Transverse colon (tissue), 4 donors: ENCODE measurements at regions of chr1 and their contacts with region 1.

Region 1: GRCh38 chr1:21434394-21434793 is 5.5 kb upstream of the NBPF3 start:
- DNase-seq: no peak
- H3K4me3 ChIP-seq: no peak overlapping the region
- H3K27ac ChIP-seq: no peak overlapping the region
- H3K4me1 ChIP-seq: peaks cover 0 to 11% (median 3%) of the 10 kb centered on the region in 4 donors
- H3K27me3 ChIP-seq: peaks cover 13% of the 10 kb centered on the region
- CTCF ChIP-seq: no peak
- EP300 ChIP-seq: no peak
- POLR2A ChIP-seq: no peak

Region 2: DNA sequence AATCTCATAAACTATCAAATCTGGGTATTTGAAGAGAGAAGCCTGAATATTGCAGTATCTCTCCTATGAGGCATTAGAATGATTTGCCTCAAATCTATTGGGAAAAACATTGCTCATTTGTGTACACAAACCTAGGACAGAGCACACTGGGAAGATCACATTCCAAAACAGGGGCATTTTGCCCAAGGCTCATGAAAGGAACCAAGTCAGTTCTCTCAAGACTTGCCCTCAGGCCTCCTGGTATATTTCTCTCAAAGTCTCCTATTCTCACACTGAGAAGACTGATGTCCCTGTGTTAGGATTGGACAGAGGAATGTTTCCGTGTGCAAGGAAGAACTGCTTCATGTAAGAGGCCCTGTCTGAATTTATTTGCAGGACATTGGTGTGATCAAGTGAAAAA is 44.6 kb after region 1 on chr1:
- in situ Hi-C with region 1: loop called in 1 of 4 experiments (anchors 5 kb)
- intact Hi-C with region 1: no loop called
- DNase-seq: no peak
- H3K4me3 ChIP-seq: no peak overlapping the region
- H3K27ac ChIP-seq: no peak overlapping the region
- H3K4me1 ChIP-seq: no peaks in the 10 kb centered on the region
- H3K27me3 ChIP-seq: no peaks in the 10 kb centered on the region
- CTCF ChIP-seq: no peak
- EP300 ChIP-seq: no peak
- POLR2A ChIP-seq: no peak

Region 3: DNA sequence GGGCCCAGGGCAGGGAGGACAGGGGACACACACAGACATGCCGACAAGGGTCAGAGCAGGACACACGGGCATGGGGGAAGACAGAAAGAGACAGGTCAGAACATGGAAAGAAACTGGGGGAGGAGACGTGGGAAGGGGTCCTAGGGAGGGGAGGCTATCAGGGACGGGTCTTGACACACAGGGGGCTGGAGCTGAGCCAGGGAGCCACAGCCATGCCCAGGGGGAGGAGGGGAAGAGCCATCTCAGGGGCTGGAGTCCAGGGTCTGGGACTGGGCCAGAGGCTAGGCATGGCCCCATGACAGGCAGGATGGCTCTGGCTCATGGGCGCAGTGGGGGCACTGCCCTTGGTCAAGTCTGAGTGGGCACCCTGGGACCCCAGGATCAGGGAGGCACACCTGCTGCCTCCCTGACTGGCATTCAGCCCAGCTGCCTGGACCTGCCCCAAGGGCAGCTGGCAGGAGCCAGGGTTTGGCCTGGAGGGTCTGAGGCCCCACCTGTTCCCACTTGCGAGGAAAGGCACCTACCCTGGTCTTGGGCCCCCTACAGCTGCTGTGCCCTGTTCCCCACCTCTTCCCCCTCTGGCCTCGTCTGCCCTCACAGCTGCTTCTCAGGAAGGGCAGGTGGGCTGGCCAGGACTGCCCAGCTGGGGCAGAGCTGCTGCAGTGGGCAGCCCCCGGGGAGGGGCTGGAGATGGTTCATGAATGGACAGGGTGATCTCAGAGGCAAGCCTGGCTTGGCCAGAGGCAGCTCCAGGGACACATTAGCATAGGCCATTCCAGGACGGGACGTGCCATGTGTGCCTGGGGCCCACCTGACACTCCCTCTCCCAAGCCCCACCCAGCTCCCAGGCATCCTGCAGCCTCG is 459.9 kb after region 1 on chr1:
- in situ Hi-C with region 1: no loop called
- intact Hi-C with region 1: loop called (anchors 5 kb)
- DNase-seq: no peak
- H3K4me3 ChIP-seq: no peak overlapping the region
- H3K27ac ChIP-seq: peak overlapping the region; percentile 19 to 98 (median 94)
- H3K4me1 ChIP-seq: peaks cover 33 to 42% (median 38%) of the 10 kb centered on the region in 4 donors
- H3K27me3 ChIP-seq: no peaks in the 10 kb centered on the region
- CTCF ChIP-seq: no peak
- EP300 ChIP-seq: no peak
- POLR2A ChIP-seq: no peak